ENCODE measurements at regions of chr15 and their contacts with region 1.

Region 1: DNA sequence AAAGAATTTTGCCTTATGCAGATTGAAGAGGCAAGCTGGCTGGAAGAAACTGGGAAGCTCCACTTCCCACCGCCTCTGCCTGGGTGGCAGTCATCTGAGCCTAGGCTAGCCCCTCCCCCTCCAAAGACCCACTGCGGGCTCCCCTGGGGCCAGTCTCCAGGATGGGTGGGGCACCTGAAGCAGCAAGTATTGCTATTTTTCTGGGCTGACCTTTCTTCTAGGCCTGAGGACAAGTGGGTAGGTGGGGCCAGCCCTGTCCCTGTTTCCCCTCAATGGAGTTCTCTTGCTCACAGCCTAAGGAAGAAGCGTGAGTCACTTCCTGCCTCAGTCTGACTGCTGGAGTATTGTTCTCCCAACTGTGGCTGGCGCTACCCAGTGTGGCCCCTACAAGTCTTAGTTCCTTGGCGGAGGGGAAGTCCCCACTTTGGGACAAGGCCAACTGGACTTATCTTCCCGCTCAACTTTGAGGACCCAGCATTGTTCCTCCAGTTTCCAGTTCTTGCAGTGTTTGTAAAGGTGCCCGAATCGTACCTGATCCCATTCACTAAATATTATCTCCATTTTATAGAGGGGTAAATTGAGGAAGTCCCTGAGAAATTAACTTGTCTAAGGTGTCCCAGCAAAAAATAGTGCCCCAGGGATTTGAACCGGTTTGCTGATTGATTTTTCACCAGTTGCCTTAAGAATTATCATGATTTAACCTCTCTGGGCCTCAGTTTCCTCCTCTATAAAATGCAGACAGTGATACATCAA is 1.4 kb downstream of the FURIN start:
- H3K4me3 Mint-ChIP-seq: peak overlapping the region; percentile 81
- H3K27ac Mint-ChIP-seq: peak overlapping the region; percentile 89
- H3K4me1 Mint-ChIP-seq: peaks cover 81% of the 10 kb centered on the region
- H3K27me3 Mint-ChIP-seq: no peaks in the 10 kb centered on the region

Region 2: DNA sequence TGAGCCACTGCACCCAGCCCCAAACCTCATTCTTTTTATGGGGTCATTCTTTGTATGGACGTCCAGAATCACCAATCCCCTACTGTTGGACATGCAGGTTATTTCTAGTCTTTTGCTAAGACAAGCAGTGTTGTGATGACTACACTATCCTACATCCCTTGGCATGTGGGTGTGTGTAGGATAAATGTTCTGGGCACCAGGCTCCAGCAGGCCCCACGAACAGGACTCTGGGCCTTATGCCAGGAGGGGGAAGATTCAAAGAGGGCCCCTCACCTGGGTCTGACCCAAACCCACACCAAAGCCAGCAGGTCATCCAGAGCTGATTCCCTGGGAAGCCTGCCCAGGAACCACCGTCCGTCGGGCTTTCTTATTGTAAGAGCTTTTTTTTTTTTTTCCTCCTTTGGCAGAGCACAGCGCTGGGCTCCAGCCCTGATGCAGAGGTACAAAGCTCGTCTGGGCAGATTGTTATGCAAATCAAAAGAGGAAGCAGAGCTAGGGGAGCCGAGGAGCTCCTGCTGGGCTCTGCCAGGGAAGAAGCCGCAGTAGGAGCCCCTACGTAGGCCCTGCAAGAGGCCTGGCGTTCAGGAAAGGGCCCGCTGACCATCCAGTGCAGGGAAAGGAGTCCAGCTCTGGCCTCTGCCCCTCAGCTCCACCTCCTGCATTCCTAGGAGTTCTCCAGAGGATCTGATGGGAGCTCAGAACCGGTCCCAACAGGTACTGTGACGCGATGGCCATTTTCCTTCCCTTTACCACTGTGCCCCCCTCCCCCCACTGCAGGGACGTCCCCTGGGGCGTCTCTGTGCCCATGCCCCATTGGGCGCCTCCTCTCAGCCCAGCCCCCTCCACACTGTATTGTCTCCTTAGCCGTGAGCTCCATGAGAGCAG is 30.3 kb before region 1 on chr15:
- intact Hi-C with region 1: loop called (anchors 5 kb)
- H3K4me3 Mint-ChIP-seq: peak overlapping the region; percentile 85
- H3K27ac Mint-ChIP-seq: peak overlapping the region; percentile 98
- H3K4me1 Mint-ChIP-seq: peaks cover 91% of the 10 kb centered on the region
- H3K27me3 Mint-ChIP-seq: peaks cover 2% of the 10 kb centered on the region

Region 3: GRCh38 chr15:90851114-90851513 is 18.7 kb before region 1 on chr15:
- intact Hi-C with region 1: no loop called
- H3K4me3 Mint-ChIP-seq: no peak overlapping the region
- H3K27ac Mint-ChIP-seq: peak overlapping the region; percentile 85
- H3K4me1 Mint-ChIP-seq: peaks cover 57% of the 10 kb centered on the region
- H3K27me3 Mint-ChIP-seq: no peaks in the 10 kb centered on the region